ENCODE measurements at regions of chr14 and their contacts with region 1.

Region 1: DNA sequence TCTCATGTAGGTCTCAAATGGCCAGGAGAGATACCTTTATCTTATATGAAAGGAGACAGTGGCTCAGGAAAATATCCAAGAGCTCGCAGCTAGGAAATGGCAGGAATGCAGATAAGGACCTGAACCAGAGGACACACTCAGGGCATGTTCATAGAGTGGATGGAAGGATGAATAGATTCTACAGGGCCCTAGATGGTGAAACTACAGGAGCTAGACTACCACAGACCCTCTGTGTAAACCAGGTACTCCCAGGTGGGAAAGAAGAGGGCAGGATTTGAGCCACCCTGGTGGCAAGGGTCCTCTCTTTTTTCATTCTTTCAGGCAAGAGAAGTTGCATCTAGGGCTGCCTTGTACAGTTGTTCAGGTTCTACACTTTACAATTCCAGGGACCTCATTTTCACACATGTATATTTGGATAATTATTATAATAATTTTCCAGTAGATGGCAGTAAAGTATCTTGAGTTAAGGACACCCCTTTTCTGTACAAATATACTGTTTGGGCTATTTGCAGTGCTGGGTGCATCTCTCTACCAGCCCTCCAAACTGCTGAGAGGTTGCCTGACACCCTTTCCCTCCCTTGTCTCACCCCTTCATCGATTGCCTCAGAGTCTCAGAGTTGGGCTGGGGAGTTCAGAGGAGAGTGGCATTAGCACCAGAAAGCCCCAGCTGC is 10.5 kb upstream of the ZDHHC22 start:
- DNase-seq: peak; percentile 28
- ATAC-seq: peak; percentile 76
- H3K4me3 ChIP-seq: no peak overlapping the region
- H3K27ac ChIP-seq: no peak overlapping the region
- H3K4me1 ChIP-seq: peaks cover 0 to 14% of the 10 kb centered on the region in 2 experiments; a peak in 2 of 4 replicates
- H3K27me3 ChIP-seq: no peaks in the 10 kb centered on the region; the same call in 1 of the 2 replicates
- CTCF ChIP-seq: peak; percentile 7 to 62 (median 42); a peak in 3 of 6 replicates
- POLR2A ChIP-seq: no peak
- RAD21 ChIP-seq: peak; percentile 79

Region 2: GRCh38 chr14:77124345-77125280 is 27.4 kb before region 1 on chr14:
- CTCF ChIA-PET with region 1: interaction called, 10 read pairs
- POLR2A ChIA-PET with region 1: no interaction called
- RAD21 ChIA-PET with region 1: no interaction called
- intact Hi-C with region 1: no loop called
- DNase-seq: no peak
- ATAC-seq: no peak
- H3K4me3 ChIP-seq: peak overlapping the region; percentile 15 to 24; a peak in 3 of 4 replicates
- H3K27ac ChIP-seq: peak overlapping the region; percentile 45
- H3K4me1 ChIP-seq: peaks cover 48 to 74% of the 10 kb centered on the region in 2 experiments
- H3K27me3 ChIP-seq: no peaks in the 10 kb centered on the region
- CTCF ChIP-seq: no peak; a peak in 1 of 6 replicates
- POLR2A ChIP-seq: no peak
- RAD21 ChIP-seq: no peak

Region 3: GRCh38 chr14:77181603-77182437 is 29.8 kb after region 1 on chr14 and contains the start of gene TMEM63C:
- CTCF ChIA-PET with region 1: interaction called, 23 read pairs
- POLR2A ChIA-PET with region 1: no interaction called
- RAD21 ChIA-PET with region 1: no interaction called
- intact Hi-C with region 1: no loop called
- DNase-seq: peak; percentile 93
- ATAC-seq: peak; percentile 93
- H3K4me3 ChIP-seq: peak within 1 kb of the TSS; percentile 66 to 68
- H3K27ac ChIP-seq: peak within 1 kb of the TSS; percentile 64
- H3K4me1 ChIP-seq: peaks cover 12 to 50% of the 10 kb centered on the region in 2 experiments
- H3K27me3 ChIP-seq: no peaks in the 10 kb centered on the region
- CTCF ChIP-seq: 0 out of 6 replicates have a peak, but pooled peaks of 1 of the 3 experiments have one; percentile 12
- POLR2A ChIP-seq: no peak
- RAD21 ChIP-seq: no peak
- total RNA-seq, gene TMEM63C: 5.7 TPM

Region 4: GRCh38 chr14:77301103-77301502 is 149.1 kb after region 1 on chr14:
- CTCF ChIA-PET with region 1: interaction called, 12 read pairs
- POLR2A ChIA-PET with region 1: no interaction called
- RAD21 ChIA-PET with region 1: interaction called in 1 of 2 experiments, 3 read pairs
- intact Hi-C with region 1: no loop called
- DNase-seq: peak; percentile 68
- ATAC-seq: peak; percentile 69
- H3K4me3 ChIP-seq: no peak overlapping the region
- H3K27ac ChIP-seq: no peak overlapping the region
- H3K4me1 ChIP-seq: peaks cover 19 to 22% of the 10 kb centered on the region in 2 experiments
- H3K27me3 ChIP-seq: no peaks in the 10 kb centered on the region
- CTCF ChIP-seq: peak; percentile 87 to 92 (median 89)
- POLR2A ChIP-seq: no peak
- RAD21 ChIP-seq: peak; percentile 82

Region 5: GRCh38 chr14:77320238-77320935 is 168.3 kb after region 1 on chr14 and contains the start of gene POMT2:
- CTCF ChIA-PET with region 1: interaction called, 112 read pairs
- POLR2A ChIA-PET with region 1: interaction called, 12 read pairs
- RAD21 ChIA-PET with region 1: interaction called, 10 to 14 read pairs
- intact Hi-C with region 1: loop called (anchors 1 kb)
- DNase-seq: peak; percentile 78
- ATAC-seq: peak; percentile 71
- H3K4me3 ChIP-seq: peak within 1 kb of the TSS; percentile 72
- H3K27ac ChIP-seq: peak within 1 kb of the TSS; percentile 94
- H3K4me1 ChIP-seq: peaks cover 8 to 25% of the 10 kb centered on the region in 2 experiments; a peak in 3 of 4 replicates
- H3K27me3 ChIP-seq: no peaks in the 10 kb centered on the region
- CTCF ChIP-seq: peak in 2 of 3 experiments; percentile 27 to 35; a peak in 4 of 6 replicates
- POLR2A ChIP-seq: peak; percentile 50
- RAD21 ChIP-seq: no peak
- total RNA-seq, gene POMT2: 30.2 TPM

Region 6: DNA sequence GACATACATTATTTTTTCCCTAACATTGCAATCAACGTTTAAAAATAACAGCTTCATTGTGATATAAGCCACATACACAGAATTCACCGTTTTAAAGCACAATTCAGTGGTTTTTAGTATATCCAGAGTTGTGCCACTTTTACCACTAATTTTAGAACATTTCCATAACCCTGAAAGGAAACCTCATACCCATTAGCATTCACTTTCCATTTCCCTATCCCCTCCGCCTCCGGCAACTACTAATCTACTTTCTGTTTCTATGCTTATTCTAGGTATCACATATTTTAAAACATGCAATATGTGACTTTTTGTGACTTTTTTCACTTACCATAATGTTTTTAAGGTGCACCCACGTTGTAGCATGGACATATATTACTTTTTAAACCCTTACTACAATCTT is 402.2 kb after region 1 on chr14:
- CTCF ChIA-PET with region 1: interaction called, 6 read pairs
- POLR2A ChIA-PET with region 1: no interaction called
- RAD21 ChIA-PET with region 1: no interaction called
- intact Hi-C with region 1: loop called (anchors 1 kb)
- DNase-seq: no peak
- ATAC-seq: no peak
- H3K4me3 ChIP-seq: no peak overlapping the region
- H3K27ac ChIP-seq: no peak overlapping the region
- H3K4me1 ChIP-seq: no peaks in the 10 kb centered on the region
- H3K27me3 ChIP-seq: no peaks in the 10 kb centered on the region
- CTCF ChIP-seq: no peak
- POLR2A ChIP-seq: no peak
- RAD21 ChIP-seq: no peak